HEK293 (cell line): ENCODE measurements at regions of chr16 and their contacts with region 1.

Region 1: GRCh38 chr16:55944377-55944802 is 69.2 kb upstream of the CES5A start:
- H3K4me3 ChIP-seq: no peak overlapping the region
- H3K27ac ChIP-seq: no peak overlapping the region
- H3K4me1 ChIP-seq: peaks cover 15% of the 10 kb centered on the region
- CTCF ChIP-seq: peak; percentile 61

Region 2: GRCh38 chr16:55888546-55888945 is 55.8 kb before region 1 on chr16:
- CTCF ChIA-PET with region 1: no interaction called
- POLR2A ChIA-PET with region 1: no interaction called
- H3K4me3 ChIP-seq: no peak overlapping the region
- H3K27ac ChIP-seq: no peak overlapping the region
- H3K4me1 ChIP-seq: no peaks in the 10 kb centered on the region
- CTCF ChIP-seq: no peak

Region 3: GRCh38 chr16:55933038-55933437 is 11.4 kb before region 1 on chr16:
- CTCF ChIA-PET with region 1: interaction called, 10 read pairs
- POLR2A ChIA-PET with region 1: no interaction called
- H3K4me3 ChIP-seq: no peak overlapping the region
- H3K27ac ChIP-seq: no peak overlapping the region
- H3K4me1 ChIP-seq: no peaks in the 10 kb centered on the region
- CTCF ChIP-seq: no peak

Region 4: DNA sequence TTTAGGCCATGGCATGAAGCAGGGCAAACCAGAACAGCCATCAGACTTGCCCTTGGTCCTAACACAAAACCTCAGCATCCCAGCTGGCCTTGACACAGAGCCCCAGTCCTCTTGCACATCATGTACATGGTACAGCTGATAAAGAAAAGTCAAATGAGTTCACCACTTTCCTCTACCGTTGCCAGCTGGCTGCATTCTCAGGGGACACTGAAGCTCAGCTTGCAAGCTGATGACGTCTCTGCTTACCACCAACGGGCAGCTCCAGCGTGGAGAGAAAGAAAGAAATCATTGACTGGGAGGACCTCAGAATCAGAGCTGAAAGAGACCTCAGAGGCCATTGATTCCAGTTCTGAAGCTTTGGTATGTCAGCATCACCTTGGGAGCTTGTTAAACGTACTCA is 11.5 kb after region 1 on chr16:
- CTCF ChIA-PET with region 1: interaction called, 11 read pairs
- POLR2A ChIA-PET with region 1: no interaction called
- H3K4me3 ChIP-seq: no peak overlapping the region
- H3K27ac ChIP-seq: no peak overlapping the region
- H3K4me1 ChIP-seq: no peaks in the 10 kb centered on the region
- CTCF ChIP-seq: no peak